Endothelial cell of umbilical vein (primary cell): ENCODE measurements at regions of chr10 and their contacts with region 1.

Region 1: DNA sequence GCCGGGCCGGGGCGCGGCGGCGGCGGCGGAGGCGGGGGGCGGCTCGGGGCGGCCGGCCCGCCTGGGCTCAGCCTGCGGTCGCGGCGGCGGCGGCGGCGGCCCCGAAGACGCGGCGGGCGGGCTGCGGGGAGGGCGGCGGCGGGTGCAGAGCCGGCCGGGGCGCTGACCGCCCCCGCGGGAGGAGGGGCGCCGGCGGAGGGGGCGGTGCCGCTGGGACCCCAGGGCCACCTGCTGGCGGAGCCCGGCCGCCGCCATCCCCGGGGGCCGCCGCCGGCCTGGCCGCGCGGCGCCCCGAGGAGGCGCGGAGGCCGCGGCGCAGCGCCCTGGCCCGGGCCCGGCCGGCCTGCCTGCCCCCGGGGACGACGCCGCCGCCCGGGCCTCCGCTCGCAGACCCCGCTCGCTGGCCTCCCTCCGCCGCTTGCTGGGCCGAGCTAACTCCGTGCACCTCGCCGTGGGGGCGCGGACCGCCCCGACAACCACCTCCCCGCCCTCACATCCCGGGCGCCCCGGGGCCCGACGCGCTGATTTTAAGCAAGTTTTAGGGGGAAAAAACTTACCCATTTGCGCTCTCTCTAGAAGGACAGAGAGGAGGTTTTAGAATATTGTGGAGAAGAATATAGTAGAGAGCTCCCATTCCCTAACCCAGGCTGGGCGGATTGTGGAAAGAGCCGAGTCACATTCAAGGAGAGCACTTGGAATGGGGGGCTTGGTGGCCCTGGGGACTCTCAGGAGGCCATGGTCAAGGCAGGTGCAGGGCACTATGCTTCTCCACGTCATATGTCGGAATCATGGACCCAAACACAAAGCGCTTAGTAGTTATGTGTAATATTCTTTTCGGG is at the start of gene BEND7:
- DNase-seq: peak; percentile 24
- H3K4me3 ChIP-seq: peak within 1 kb of the TSS; percentile 60 to 88 (median 84)
- H3K27ac ChIP-seq: peak within 1 kb of the TSS; percentile 76
- H3K4me1 ChIP-seq: peaks cover 26% of the 10 kb centered on the region
- H3K27me3 ChIP-seq: no peaks in the 10 kb centered on the region
- CTCF ChIP-seq: no peak
- POLR2A ChIP-seq: no peak
- total RNA-seq, gene BEND7: 30.8 and 31.7 TPM in 2 replicates

Region 2: GRCh38 chr10:13348216-13349017 is 180.7 kb before region 1 on chr10 and contains the start of gene SEPHS1:
- CTCF ChIA-PET with region 1: no interaction called
- POLR2A ChIA-PET with region 1: no interaction called
- dilution Hi-C with region 1: no loop called
- intact Hi-C with region 1: loop called (anchors 5 kb)
- DNase-seq: peak; percentile 62
- H3K4me3 ChIP-seq: peak within 1 kb of the TSS; percentile 40 to 84 (median 82)
- H3K27ac ChIP-seq: peak within 1 kb of the TSS; percentile 65
- H3K4me1 ChIP-seq: peaks cover 24% of the 10 kb centered on the region
- H3K27me3 ChIP-seq: peaks cover 30 to 36% of the 10 kb centered on the region in 2 experiments
- CTCF ChIP-seq: peak in 1 of 2 donors; percentile 5
- POLR2A ChIP-seq: no peak
- total RNA-seq, gene SEPHS1: 55.4 and 59.9 TPM in 2 replicates

Region 3: GRCh38 chr10:13399236-13399635 is 129.9 kb before region 1 on chr10:
- CTCF ChIA-PET with region 1: no interaction called
- POLR2A ChIA-PET with region 1: no interaction called
- dilution Hi-C with region 1: no loop called
- intact Hi-C with region 1: no loop called
- DNase-seq: no peak
- H3K4me3 ChIP-seq: no peak overlapping the region
- H3K27ac ChIP-seq: no peak overlapping the region
- H3K4me1 ChIP-seq: no peaks in the 10 kb centered on the region
- H3K27me3 ChIP-seq: peaks cover 0 to 9% of the 10 kb centered on the region in 2 experiments
- CTCF ChIP-seq: no peak
- POLR2A ChIP-seq: no peak

Region 4: GRCh38 chr10:13485623-13486022 is 43.5 kb before region 1 on chr10:
- CTCF ChIA-PET with region 1: no interaction called
- POLR2A ChIA-PET with region 1: no interaction called
- dilution Hi-C with region 1: no loop called
- intact Hi-C with region 1: loop called (anchors 5 kb)
- DNase-seq: peak; percentile 6
- H3K4me3 ChIP-seq: no peak overlapping the region
- H3K27ac ChIP-seq: no peak overlapping the region
- H3K4me1 ChIP-seq: no peaks in the 10 kb centered on the region
- H3K27me3 ChIP-seq: no peaks in the 10 kb centered on the region
- CTCF ChIP-seq: peak in 1 of 2 donors; percentile 15
- POLR2A ChIP-seq: no peak

Region 5: GRCh38 chr10:13586676-13587355 is 57.7 kb after region 1 on chr10 and contains the start of gene PRPF18:
- CTCF ChIA-PET with region 1: no interaction called
- POLR2A ChIA-PET with region 1: no interaction called
- dilution Hi-C with region 1: no loop called
- intact Hi-C with region 1: loop called (anchors 1 kb)
- DNase-seq: peak; percentile 90
- H3K4me3 ChIP-seq: peak within 1 kb of the TSS; percentile 65 to 97 (median 91)
- H3K27ac ChIP-seq: peak within 1 kb of the TSS; percentile 25
- H3K4me1 ChIP-seq: peaks cover 9% of the 10 kb centered on the region
- H3K27me3 ChIP-seq: peaks cover 5 to 24% of the 10 kb centered on the region in 2 experiments
- CTCF ChIP-seq: peak; percentile 98 to 99
- POLR2A ChIP-seq: peak; percentile 62
- total RNA-seq, gene PRPF18: 21.0 and 23.1 TPM in 2 replicates